Calu3 (cell line): ENCODE measurements at regions of chr5 and their contacts with region 1.

Region 1: GRCh38 chr5:175478384-175479124 is at the start of gene SFXN1:
- DNase-seq: peak; percentile 86
- H3K4me3 Mint-ChIP-seq: peak within 1 kb of the TSS; percentile 96
- H3K27ac Mint-ChIP-seq: peak within 1 kb of the TSS; percentile 80
- H3K4me1 Mint-ChIP-seq: peaks cover 18% of the 10 kb centered on the region
- H3K27me3 Mint-ChIP-seq: peaks cover 29% of the 10 kb centered on the region
- CTCF ChIP-seq: no peak
- total RNA-seq, gene SFXN1: 105 and 106 TPM in 2 replicates

Region 2: GRCh38 chr5:175288048-175288621 is 190.4 kb before region 1 on chr5:
- CTCF ChIA-PET with region 1: no interaction called
- intact Hi-C with region 1: no loop called
- DNase-seq: no peak
- H3K4me3 Mint-ChIP-seq: no peak overlapping the region
- H3K27ac Mint-ChIP-seq: no peak overlapping the region
- H3K4me1 Mint-ChIP-seq: no peaks in the 10 kb centered on the region
- H3K27me3 Mint-ChIP-seq: no peaks in the 10 kb centered on the region
- CTCF ChIP-seq: no peak

Region 3: GRCh38 chr5:175365866-175366265 is 112.7 kb before region 1 on chr5:
- CTCF ChIA-PET with region 1: no interaction called
- intact Hi-C with region 1: no loop called
- DNase-seq: no peak
- H3K4me3 Mint-ChIP-seq: no peak overlapping the region
- H3K27ac Mint-ChIP-seq: no peak overlapping the region
- H3K4me1 Mint-ChIP-seq: no peaks in the 10 kb centered on the region
- H3K27me3 Mint-ChIP-seq: no peaks in the 10 kb centered on the region
- CTCF ChIP-seq: no peak

Region 4: GRCh38 chr5:175464074-175464941 is 14.2 kb before region 1 on chr5:
- CTCF ChIA-PET with region 1: interaction called, 16 read pairs
- intact Hi-C with region 1: no loop called
- DNase-seq: peak; percentile 78
- H3K4me3 Mint-ChIP-seq: no peak overlapping the region
- H3K27ac Mint-ChIP-seq: no peak overlapping the region
- H3K4me1 Mint-ChIP-seq: no peaks in the 10 kb centered on the region
- H3K27me3 Mint-ChIP-seq: peaks cover 38% of the 10 kb centered on the region
- CTCF ChIP-seq: peak; percentile 68